Activated T-helper 1 cell treated with anti-CD3 and anti-CD28 coated beads, Interleukin-12 subunit alpha, Interleukin-12 subunit beta, Interleukin-2, Interleukin-4 antibody, amounts not matched to agents 30 ng/mL and 10 ng/mL and 1 ng/mL, durations not matched to agents 14 hours and 24 hours and 36 hours (primary cell): ENCODE measurements at regions of chr12 and their contacts with region 1.

Region 1: GRCh38 chr12:57111031-57111734 is at the start of gene STAT6:
- DNase-seq: peak; percentile 84
- H3K4me3 Mint-ChIP-seq: peak within 1 kb of the TSS; percentile 99
- H3K27ac Mint-ChIP-seq: peak within 1 kb of the TSS; percentile 98
- H3K4me1 Mint-ChIP-seq: peaks cover 51% of the 10 kb centered on the region
- H3K27me3 Mint-ChIP-seq: no peaks in the 10 kb centered on the region
- total RNA-seq, gene STAT6: 306 and 318 TPM in 2 replicates

Region 2: DNA sequence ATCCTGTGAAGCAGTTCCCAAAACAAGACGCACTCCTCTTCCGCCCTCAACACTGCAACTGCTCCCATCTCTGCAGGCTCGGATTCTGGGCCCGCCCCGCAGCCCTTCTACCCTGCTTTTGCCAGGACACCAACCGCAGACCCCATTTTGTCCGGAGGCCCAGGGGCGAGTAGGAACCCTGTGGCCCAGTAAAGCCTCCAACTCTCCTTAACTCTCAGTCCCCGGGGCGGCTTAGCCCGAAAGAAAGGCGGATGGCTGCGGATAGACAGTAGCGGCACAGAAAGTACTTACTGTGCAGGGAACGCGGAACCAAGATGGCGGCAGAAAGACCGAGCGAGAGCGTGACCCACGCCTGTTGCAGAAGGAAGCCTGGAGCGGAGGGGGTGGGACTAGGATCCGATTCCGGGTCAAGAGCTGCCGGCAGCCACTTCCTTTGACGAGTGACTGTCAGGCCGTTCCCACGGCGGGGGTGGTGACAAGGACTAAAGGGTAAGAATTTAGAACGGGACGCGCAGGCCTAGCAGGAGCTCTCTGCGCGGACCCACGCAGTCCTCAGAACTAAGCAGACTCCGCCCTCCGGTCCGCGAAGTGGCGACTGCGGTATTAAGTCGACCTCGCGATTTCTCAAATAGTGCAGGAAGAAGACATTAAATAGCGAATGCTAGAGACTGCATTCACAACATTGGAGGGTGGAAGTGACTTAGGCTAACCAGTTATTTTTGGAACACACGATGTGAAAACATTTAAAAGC is 386.0 kb before region 1 on chr12 and contains the start of gene NACA:
- intact Hi-C with region 1: loop called (anchors 1 kb)
- DNase-seq: peak; percentile 98
- H3K4me3 Mint-ChIP-seq: peak within 1 kb of the TSS; percentile 91
- H3K27ac Mint-ChIP-seq: peak within 1 kb of the TSS; percentile 91
- H3K4me1 Mint-ChIP-seq: peaks cover 48% of the 10 kb centered on the region
- H3K27me3 Mint-ChIP-seq: peaks cover 1% of the 10 kb centered on the region
- total RNA-seq, gene NACA: 942 and 963 TPM in 2 replicates

Region 3: DNA sequence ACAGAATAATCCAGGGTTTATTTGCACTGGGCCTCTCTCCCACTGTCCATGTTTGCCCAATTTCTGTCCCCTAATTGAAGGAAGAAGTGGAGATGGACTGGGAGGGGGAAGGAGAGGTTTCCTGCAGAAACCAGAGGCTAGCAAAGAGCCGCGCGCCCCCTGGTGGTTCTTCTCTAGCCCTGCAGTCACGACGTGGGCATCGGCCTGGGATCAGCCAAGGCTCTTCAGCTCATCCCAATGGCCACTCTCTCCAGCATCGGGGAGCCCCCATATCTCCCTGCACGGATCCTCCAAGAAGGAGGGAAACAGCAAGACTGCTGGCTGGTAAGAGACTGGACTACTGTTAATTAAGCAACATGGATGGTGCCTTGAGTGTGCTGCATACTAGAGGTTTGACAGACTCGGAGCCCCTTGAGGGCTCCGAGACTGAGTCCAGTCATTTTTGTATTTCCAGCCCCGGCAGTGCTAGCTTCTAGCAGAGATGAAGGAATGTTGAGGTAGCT is 123.6 kb before region 1 on chr12:
- intact Hi-C with region 1: no loop called
- DNase-seq: peak; percentile 54
- H3K4me3 Mint-ChIP-seq: no peak overlapping the region
- H3K27ac Mint-ChIP-seq: no peak overlapping the region
- H3K4me1 Mint-ChIP-seq: peaks cover 23% of the 10 kb centered on the region
- H3K27me3 Mint-ChIP-seq: peaks cover 3% of the 10 kb centered on the region

Region 4: DNA sequence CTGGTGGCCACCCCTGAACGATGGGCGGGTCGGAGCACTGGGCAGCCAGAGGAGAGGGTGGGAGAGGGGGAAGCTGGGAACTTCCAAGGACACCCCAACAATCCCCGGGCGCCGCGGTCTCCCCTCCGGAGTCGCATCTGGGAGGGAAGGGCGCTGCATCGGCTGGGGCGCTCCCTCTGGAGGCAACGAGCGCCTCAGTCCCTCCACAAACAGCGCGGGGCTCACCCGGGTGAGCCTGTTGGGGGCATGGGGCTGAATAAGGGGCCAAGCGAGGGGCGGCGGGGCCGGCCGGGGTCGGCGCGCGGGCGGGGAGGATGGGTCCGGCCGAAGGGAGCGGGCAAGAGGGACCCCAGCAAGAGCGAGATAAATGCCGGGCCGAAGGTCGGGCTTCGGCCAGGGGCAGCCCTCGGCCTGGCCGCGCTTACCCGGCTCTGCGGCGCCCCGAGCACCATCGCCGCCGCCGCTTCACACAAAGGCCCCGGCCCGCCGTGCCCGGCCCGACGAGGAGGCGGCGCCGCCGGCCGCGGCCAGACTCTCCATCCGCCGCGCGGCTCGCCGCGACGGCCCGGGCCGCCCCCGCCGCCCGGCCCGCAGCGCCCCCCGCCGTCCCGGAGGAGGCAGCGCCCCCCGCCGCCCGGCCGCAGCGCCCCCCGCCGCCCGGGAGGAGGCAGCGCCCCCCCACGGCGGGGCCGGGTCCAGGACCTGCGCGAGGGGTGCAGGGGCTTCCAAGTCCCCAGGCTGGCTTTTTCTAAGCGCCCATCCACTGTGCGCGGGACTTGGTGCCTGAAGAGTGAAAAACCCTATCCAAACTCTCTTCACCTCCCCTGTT is 105.0 kb before region 1 on chr12 and contains the start of gene ZBTB39:
- intact Hi-C with region 1: loop called (anchors 1 kb)
- DNase-seq: peak; percentile 65
- H3K4me3 Mint-ChIP-seq: peak within 1 kb of the TSS; percentile 93
- H3K27ac Mint-ChIP-seq: peak within 1 kb of the TSS; percentile 85
- H3K4me1 Mint-ChIP-seq: peaks cover 47% of the 10 kb centered on the region
- H3K27me3 Mint-ChIP-seq: no peaks in the 10 kb centered on the region
- total RNA-seq, gene ZBTB39: 10.3 and 11.2 TPM in 2 replicates

Region 5: GRCh38 chr12:57069523-57069922 is 41.7 kb before region 1 on chr12:
- intact Hi-C with region 1: loop called (anchors 1 kb)
- DNase-seq: peak; percentile 50
- H3K4me3 Mint-ChIP-seq: peak overlapping the region; percentile 23
- H3K27ac Mint-ChIP-seq: peak overlapping the region; percentile 92
- H3K4me1 Mint-ChIP-seq: peaks cover 58% of the 10 kb centered on the region
- H3K27me3 Mint-ChIP-seq: no peaks in the 10 kb centered on the region

Region 6: DNA sequence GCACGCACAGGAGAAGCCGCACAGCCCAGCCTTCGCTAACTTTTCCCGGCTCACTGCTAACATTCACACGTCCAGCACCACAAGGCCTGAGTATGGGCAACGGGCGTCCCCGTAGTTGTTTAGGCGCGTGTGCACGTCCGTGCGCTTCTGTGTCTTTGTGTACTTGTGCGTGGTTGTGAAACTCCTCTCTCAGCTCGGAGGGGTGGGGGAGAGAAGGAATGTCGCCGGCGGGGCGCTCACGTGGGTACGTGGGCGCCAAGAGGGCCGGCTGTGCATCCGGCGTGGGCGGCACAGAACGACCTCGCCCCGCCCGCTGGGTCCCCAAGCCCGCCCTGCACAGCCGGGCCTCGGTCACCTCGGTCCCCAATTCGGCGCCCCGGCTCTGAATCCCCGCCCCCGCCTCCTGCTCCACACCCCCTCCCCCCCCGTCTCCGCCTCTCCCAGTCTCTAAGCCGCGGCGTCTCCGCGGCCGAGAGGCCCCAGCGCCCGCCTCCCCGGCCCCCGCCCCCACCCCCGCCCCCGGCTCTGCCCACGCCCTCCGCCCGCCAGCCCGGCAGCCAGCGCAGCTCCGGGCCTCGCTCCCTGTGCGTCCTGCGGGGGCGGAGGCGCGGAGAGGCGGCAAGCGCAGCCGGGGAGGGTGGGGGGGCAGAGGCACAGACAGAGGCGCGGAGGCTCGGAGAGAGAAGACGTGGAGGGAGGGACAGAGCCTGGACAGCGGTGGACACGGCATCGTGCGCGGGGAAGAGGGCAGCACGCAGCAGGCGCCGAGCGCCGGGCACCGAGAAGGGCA is 22.5 kb before region 1 on chr12 and contains the start of gene NAB2:
- intact Hi-C with region 1: loop called (anchors 1 kb)
- DNase-seq: peak; percentile 88
- H3K4me3 Mint-ChIP-seq: peak within 1 kb of the TSS; percentile 97
- H3K27ac Mint-ChIP-seq: peak within 1 kb of the TSS; percentile 98
- H3K4me1 Mint-ChIP-seq: peaks cover 77% of the 10 kb centered on the region
- H3K27me3 Mint-ChIP-seq: no peaks in the 10 kb centered on the region
- total RNA-seq, gene NAB2: 73.6 and 80.3 TPM in 2 replicates

Region 7: GRCh38 chr12:57175428-57176138 is 64.4 kb after region 1 on chr12:
- intact Hi-C with region 1: no loop called
- DNase-seq: peak; percentile 14
- H3K4me3 Mint-ChIP-seq: no peak overlapping the region
- H3K27ac Mint-ChIP-seq: no peak overlapping the region
- H3K4me1 Mint-ChIP-seq: no peaks in the 10 kb centered on the region
- H3K27me3 Mint-ChIP-seq: peaks cover 4% of the 10 kb centered on the region

Region 8: GRCh38 chr12:57238854-57239554 is 127.8 kb after region 1 on chr12:
- intact Hi-C with region 1: loop called (anchors 5 kb)
- DNase-seq: peak; percentile 86
- H3K4me3 Mint-ChIP-seq: peak overlapping the region; percentile 95
- H3K27ac Mint-ChIP-seq: peak overlapping the region; percentile 78
- H3K4me1 Mint-ChIP-seq: peaks cover 64% of the 10 kb centered on the region
- H3K27me3 Mint-ChIP-seq: peaks cover 48% of the 10 kb centered on the region